ENCODE measurements at regions of chr11 and their contacts with region 1.

Region 1: DNA sequence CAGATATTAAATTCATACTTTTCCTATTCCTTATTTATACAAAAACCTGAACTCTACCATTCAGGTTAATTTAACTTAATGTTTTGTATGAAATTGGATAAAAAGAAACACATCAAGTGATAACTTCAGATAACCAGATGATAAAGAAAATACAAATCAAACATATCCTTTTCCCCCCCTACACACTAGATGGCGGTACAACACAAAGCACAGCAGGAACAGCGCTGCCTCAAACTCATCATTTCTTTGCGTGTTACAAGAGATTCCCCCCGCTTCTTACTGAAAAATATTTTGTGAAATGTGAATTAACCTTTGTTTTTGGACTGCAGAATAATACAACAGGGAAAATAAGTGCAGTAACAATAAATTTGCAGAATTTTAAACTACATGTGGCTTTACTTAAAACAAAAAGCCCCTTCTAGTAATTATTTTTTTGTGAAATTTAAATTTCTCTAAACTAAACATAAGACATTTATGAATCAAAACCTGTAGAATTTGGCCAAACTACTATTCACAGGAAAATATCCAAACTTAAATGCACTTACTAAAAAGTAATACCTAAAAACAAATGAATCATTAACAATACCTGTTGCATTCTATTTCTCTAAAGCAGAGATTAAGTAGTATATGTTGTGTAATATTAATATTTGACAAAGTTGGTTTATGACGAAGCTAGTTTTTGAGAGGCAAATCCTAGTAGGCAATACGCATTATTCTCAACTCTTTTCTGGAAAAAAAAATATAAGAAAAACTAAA is 74.4 kb downstream of the ARHGAP32 start:
- DNase-seq: no peak
- H3K4me3 ChIP-seq: no peak overlapping the region
- H3K27ac ChIP-seq: no peak overlapping the region
- H3K4me1 ChIP-seq: no peaks in the 10 kb centered on the region
- H3K27me3 ChIP-seq: no peaks in the 10 kb centered on the region
- CTCF ChIP-seq: peak; percentile 92

Region 2: DNA sequence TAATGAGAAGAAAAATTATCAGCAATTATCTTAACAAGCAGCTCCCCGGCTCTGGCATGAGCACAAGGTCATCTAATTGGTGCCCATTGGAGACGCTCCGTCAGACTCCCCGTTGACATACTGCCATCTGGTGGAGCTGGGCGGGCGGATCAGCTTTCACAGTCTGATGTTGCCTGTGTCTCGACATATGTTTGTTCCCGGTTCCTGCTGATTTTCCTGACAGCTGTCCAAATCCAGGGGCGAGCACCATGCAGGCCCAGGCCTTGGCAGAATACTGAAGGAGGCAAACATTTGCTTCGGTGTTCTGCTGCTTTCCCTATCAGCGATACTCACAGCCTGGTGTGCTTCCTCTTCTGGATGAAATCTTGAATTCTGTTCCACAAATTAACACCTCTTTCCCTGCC is 214.1 kb after region 1 on chr11:
- intact Hi-C with region 1: loop called (anchors 2 kb)
- DNase-seq: peak; percentile 79
- H3K4me3 ChIP-seq: no peak overlapping the region
- H3K27ac ChIP-seq: no peak overlapping the region
- H3K4me1 ChIP-seq: no peaks in the 10 kb centered on the region
- H3K27me3 ChIP-seq: no peaks in the 10 kb centered on the region
- CTCF ChIP-seq: peak; percentile 89

Measured in left ventricle myocardium inferior (tissue), 1 donor.